ENCODE measurements at regions of chr4 and their contacts with region 1.

Region 1: GRCh38 chr4:164956766-164957643 is 20.5 kb downstream of the TRIM61 start:
- DNase-seq: peak; percentile 86
- ATAC-seq: peak; percentile 100
- H3K4me3 Mint-ChIP-seq: peak overlapping the region; percentile 78
- H3K27ac Mint-ChIP-seq: peak overlapping the region; percentile 70
- H3K4me1 Mint-ChIP-seq: peaks cover 8% of the 10 kb centered on the region
- H3K27me3 Mint-ChIP-seq: peaks cover 2% of the 10 kb centered on the region

Region 2: DNA sequence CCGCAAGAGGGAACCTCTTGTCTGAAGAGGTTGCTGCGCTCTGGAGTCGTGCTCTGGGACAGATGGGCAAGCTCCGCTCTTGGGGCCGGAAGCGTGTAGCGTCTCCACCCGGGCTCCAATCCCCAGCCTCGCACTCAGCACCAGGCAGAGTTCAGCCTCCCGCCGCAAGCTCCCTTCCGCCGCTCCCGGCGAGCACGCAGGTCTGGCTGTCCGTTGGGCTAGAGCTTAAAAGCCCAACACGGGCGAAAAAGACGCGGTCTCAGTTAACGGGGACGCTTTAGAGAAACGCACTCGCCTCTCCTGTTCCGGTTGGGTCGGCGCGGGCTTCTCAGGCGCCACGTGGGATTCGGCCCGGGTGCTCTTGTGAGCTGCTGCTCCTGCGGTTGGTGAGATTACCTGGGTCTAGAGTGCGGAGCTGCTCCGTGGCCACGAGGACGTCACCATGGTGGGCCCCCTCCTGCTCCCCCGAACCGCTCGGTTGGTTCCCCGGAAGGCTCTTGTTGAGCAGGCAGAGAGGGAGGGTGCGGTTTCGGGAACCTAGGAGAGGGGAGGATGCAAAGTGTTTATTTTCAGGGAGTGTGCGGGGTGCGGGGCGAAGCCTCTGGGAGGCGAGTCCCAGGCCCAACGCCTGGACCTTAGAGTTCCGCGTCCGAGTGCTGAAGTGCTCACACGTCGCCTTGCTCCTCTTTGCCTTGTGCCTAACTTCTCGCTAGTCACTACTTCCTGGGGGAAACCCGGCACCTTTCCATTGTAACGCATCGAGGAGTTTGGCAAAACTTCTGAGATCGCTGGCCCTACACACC is 1462.4 kb before region 1 on chr4 and contains the start of gene TMA16:
- CTCF ChIA-PET with region 1: no interaction called
- POLR2A ChIA-PET with region 1: no interaction called
- intact Hi-C with region 1: loop called in 1 of 2 experiments (anchors 10 kb)
- DNase-seq: peak; percentile 92
- ATAC-seq: peak; percentile 91
- H3K4me3 Mint-ChIP-seq: peak within 1 kb of the TSS; percentile 99
- H3K27ac Mint-ChIP-seq: peak within 1 kb of the TSS; percentile 100
- H3K4me1 Mint-ChIP-seq: peaks cover 27% of the 10 kb centered on the region
- H3K27me3 Mint-ChIP-seq: no peaks in the 10 kb centered on the region
- total RNA-seq, gene TMA16: 54.7 to 63.6 TPM

Region 3: DNA sequence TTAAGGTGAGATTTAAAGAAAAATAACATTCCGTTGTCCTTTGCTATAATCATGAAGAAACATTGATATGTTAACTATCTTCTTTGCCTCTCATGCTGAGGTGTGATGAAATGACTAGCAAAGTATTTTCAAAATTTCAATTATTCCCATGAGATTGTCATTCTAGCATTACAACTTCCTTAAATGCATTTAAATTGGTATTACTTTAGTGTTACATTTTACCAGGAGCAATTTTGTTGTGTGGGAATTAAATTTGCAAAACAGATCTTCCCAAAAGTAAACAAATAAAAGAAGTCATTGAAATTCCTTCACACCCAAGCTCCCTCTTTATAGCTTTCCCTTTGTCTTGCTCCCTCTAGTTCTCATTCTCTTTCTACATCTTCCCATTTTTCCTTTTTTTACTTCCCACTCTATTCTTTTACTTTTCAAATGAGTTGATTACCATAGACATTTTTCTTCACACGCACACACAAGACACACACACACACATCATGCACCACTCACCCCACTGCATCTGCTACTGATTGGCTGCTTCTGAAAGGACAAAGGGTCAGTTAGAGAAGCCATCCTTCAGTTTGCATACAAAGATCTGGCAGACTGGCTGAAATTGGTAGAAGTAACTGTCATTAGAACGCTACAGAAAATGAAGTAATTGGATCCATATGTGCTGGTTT is 90.1 kb before region 1 on chr4:
- CTCF ChIA-PET with region 1: no interaction called
- POLR2A ChIA-PET with region 1: no interaction called
- intact Hi-C with region 1: no loop called
- DNase-seq: no peak
- ATAC-seq: no peak
- H3K4me3 Mint-ChIP-seq: no peak overlapping the region
- H3K27ac Mint-ChIP-seq: no peak overlapping the region
- H3K4me1 Mint-ChIP-seq: no peaks in the 10 kb centered on the region
- H3K27me3 Mint-ChIP-seq: no peaks in the 10 kb centered on the region

Region 4: GRCh38 chr4:165009493-165010227 is 52.7 kb after region 1 on chr4:
- CTCF ChIA-PET with region 1: no interaction called
- POLR2A ChIA-PET with region 1: no interaction called
- intact Hi-C with region 1: loop called in 1 of 2 experiments (anchors 1 kb)
- DNase-seq: peak; percentile 53
- ATAC-seq: peak; percentile 93
- H3K4me3 Mint-ChIP-seq: no peak overlapping the region
- H3K27ac Mint-ChIP-seq: no peak overlapping the region
- H3K4me1 Mint-ChIP-seq: peaks cover 11% of the 10 kb centered on the region
- H3K27me3 Mint-ChIP-seq: peaks cover 21% of the 10 kb centered on the region

Region 5: GRCh38 chr4:165398570-165398969 is 441.6 kb after region 1 on chr4:
- CTCF ChIA-PET with region 1: no interaction called
- POLR2A ChIA-PET with region 1: no interaction called
- intact Hi-C with region 1: no loop called
- DNase-seq: no peak
- ATAC-seq: no peak
- H3K4me3 Mint-ChIP-seq: no peak overlapping the region
- H3K27ac Mint-ChIP-seq: no peak overlapping the region
- H3K4me1 Mint-ChIP-seq: no peaks in the 10 kb centered on the region
- H3K27me3 Mint-ChIP-seq: peaks cover 3% of the 10 kb centered on the region